Mammary epithelial cell (primary cell): ENCODE measurements at regions of chr4 and their contacts with region 1.

Region 1: DNA sequence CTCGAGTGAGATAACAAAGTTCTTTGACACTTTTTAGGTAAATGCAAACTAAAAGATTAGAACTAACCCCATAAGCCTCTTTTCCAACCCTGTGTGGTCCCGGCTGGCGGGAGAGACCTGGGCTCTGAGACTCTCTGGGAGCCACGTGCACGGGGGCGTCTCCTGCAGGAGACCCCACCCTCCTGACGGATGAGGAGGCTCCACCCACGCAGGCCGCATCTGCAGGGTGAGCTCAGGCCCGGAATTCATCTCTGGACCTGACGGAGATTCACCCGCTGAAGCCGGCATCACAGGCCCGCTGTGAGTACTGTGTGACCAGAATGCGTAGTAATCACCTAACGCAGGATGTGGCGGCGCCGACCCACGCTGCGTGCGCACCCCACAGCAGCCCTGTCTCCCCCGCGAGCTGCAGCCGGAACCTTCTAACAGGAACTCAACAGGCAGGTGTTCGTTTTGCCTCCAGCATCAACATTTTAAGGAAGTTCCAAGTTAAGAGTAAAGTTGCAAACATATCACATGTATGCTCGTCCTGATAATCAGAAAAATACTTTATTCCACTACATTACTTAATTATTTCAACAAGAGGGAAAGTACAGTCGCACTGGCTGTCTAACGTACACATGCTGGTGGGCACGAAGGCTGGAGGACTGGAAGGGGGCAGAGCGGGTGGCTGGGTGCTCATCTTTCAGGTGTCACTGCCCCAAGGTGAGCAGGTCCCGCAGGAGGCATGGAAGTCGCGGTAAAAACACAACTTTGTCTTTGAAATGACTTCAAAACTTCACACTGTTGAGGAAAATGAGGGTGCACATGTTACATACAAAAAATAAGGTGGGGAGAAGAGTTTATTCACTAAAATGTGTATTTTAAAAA is 44.5 kb downstream of the FGFRL1 start:
- DNase-seq: no peak
- H3K4me3 ChIP-seq: no peak overlapping the region
- H3K27ac ChIP-seq: no peak overlapping the region
- H3K4me1 ChIP-seq: peaks cover 25% of the 10 kb centered on the region
- H3K27me3 ChIP-seq: peaks cover 26% of the 10 kb centered on the region
- CTCF ChIP-seq: no peak

Region 2: DNA sequence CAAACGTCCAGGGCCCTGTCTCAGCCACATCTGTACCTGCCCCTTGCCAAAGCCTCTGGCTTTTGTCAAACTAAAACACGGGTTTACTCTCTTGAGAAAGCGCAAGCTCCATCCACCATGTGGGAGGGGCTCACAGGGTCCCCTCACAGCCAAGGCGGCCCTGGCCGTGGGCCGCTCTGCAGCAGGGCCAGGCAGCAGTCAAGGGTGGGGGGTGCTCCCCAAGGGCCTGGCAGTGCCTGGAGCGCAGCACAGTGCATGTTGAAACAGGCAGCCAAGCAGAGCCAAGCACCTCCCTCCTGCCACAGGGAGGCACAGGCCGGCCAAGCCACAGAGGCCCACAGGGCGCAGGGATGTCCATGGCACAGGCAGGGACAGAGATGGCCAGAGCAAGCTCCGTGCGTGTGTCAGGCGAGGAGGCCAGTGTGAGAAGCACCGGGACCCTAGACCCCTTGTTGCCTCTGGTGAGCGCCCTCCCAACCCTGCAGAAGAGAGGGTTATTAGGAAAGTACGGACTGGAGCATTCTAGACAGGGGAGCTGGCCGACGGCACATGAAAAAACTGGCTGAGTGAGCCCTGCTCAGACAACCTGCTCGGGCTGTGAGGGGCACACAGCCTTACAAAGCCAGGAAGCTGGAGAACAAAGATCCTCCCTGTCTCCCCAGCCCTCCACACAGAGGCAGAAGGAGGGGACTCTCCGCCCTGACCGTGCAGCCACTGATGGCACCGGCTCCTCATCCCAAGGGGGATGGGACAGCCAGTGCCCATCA is 589.1 kb after region 1 on chr4:
- CTCF ChIA-PET with region 1: no interaction called
- dilution Hi-C with region 1: loop called (anchors 10 kb)
- in situ Hi-C with region 1: no loop called
- intact Hi-C with region 1: no loop called
- DNase-seq: peak; percentile 62
- H3K4me3 ChIP-seq: no peak overlapping the region
- H3K27ac ChIP-seq: no peak overlapping the region
- H3K4me1 ChIP-seq: peaks cover 13% of the 10 kb centered on the region
- H3K27me3 ChIP-seq: peaks cover 2% of the 10 kb centered on the region
- CTCF ChIP-seq: peak in 1 of 2 donors; percentile 4